CD4-positive, alpha-beta memory T cell (primary cell): ENCODE measurements at regions of chr1 and their contacts with region 1.

Region 1: GRCh38 chr1:109099938-109100773 is 9.6 kb downstream of the TMEM167B start:
- DNase-seq: peak; percentile 96 to 98 (median 97)
- H3K4me3 ChIP-seq: peak overlapping the region; percentile 80 to 81
- H3K4me3 Mint-ChIP-seq: peak overlapping the region; percentile 91 to 100 (median 96)
- H3K27ac ChIP-seq: peak overlapping the region; percentile 80
- H3K27ac Mint-ChIP-seq: peak overlapping the region; percentile 90 to 99 (median 98)
- H3K4me1 ChIP-seq: peaks cover 15% of the 10 kb centered on the region
- H3K4me1 Mint-ChIP-seq: peaks cover 7 to 20% (median 16%) of the 10 kb centered on the region in 4 donors
- H3K27me3 ChIP-seq: no peaks in the 10 kb centered on the region
- H3K27me3 Mint-ChIP-seq: no peaks in the 10 kb centered on the region

Region 2: DNA sequence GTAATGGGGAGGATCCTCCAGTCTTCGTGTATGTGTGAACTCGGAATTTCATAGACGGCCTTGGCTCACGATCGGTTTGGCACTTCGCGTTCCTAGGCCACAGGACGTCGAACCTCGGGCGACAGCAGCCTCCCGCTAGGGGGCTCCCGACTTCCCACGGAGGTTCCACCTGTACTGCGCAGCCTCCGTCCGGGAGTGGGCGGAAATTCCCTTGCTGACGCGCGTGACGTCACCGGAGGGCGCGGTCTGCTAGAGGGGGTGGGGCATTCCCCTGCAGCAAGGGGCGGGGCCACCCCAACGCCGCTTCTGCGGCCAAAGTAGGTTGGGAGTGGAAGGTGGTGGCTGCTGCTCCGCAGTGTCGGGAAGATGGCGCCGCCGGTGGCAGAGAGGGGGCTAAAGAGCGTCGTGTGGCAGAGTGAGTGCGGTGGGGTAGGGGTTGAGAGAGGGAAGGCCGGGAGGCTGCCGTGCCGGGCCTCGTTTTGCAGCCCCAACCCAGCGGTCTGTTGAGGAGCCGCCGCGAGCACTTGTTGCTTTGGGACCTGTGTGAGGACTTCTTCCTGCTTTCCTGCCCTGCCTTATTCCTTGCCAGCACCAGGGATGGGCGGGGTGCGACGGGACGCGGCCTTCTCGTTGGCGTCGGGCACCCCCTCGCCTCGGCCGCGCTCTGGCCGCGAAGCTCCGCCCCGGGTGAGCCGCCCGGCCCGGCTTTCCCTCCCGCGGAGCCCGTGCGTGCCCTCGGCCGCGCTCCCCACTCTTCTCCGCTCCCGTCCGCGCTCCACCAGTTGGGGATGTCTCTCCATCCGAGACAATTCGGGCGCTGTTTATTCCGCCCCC is 353.6 kb before region 1 on chr1 and contains the start of gene STXBP3:
- CTCF ChIA-PET with region 1: no interaction called
- POLR2A ChIA-PET with region 1: no interaction called
- intact Hi-C with region 1: loop called (anchors 1 kb)
- DNase-seq: peak; percentile 98 to 99 (median 99)
- H3K4me3 ChIP-seq: peak within 1 kb of the TSS; percentile 57 to 85
- H3K4me3 Mint-ChIP-seq: peak within 1 kb of the TSS; percentile 94 to 100 (median 99)
- H3K27ac ChIP-seq: peak within 1 kb of the TSS; percentile 95
- H3K27ac Mint-ChIP-seq: peak within 1 kb of the TSS; percentile 94 to 100 (median 99)
- H3K4me1 ChIP-seq: peaks cover 41% of the 10 kb centered on the region
- H3K4me1 Mint-ChIP-seq: peaks cover 25 to 47% (median 34%) of the 10 kb centered on the region in 4 donors
- H3K27me3 ChIP-seq: no peaks in the 10 kb centered on the region
- H3K27me3 Mint-ChIP-seq: no peaks in the 10 kb centered on the region
- total RNA-seq, gene STXBP3: 90.9 to 92.5 TPM

Region 3: DNA sequence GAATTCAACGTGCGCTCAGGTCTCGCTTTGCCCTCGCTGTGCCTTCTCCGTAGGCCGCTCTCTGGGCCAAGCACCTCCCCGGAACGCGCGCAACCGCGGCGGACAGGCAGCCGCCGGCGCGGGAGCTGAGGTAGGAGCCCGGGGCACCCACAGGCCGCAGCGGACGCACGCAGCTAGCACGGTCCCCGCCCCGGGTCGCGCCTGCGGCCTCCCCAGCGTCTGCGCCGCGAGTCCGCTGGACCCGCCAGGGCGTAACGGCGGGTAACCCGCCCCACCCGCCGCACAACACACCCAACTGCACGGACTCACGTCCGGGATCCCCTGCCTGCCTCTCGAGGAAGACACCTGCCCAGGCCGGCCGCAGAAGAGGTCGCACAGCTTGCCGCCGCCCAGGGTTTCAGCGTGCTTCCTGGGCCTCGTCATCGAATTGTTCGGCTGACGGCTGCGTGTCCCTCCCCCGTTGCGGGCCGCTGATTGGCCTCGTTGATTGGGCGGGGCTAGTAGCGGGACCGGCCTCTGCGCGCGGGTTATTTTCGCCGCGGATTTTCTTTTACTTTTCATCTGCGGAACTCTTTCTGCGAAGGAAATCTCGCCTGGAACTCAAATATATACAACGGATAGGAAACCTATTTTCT is 137.0 kb before region 1 on chr1 and contains the start of gene CLCC1:
- CTCF ChIA-PET with region 1: interaction called, 5 read pairs
- POLR2A ChIA-PET with region 1: interaction called, 17 read pairs
- intact Hi-C with region 1: loop called (anchors 1 kb)
- DNase-seq: peak; percentile 92 to 96 (median 94)
- H3K4me3 ChIP-seq: peak within 1 kb of the TSS; percentile 68 to 79
- H3K4me3 Mint-ChIP-seq: peak within 1 kb of the TSS; percentile 88 to 95 (median 90)
- H3K27ac ChIP-seq: peak within 1 kb of the TSS; percentile 81
- H3K27ac Mint-ChIP-seq: peak within 1 kb of the TSS; percentile 91 to 97 (median 96)
- H3K4me1 ChIP-seq: peaks cover 25% of the 10 kb centered on the region
- H3K4me1 Mint-ChIP-seq: peaks cover 18 to 52% (median 31%) of the 10 kb centered on the region in 4 donors
- H3K27me3 ChIP-seq: no peaks in the 10 kb centered on the region
- H3K27me3 Mint-ChIP-seq: no peaks in the 10 kb centered on the region
- total RNA-seq, gene CLCC1: 29.7 to 31.6 TPM

Region 4: DNA sequence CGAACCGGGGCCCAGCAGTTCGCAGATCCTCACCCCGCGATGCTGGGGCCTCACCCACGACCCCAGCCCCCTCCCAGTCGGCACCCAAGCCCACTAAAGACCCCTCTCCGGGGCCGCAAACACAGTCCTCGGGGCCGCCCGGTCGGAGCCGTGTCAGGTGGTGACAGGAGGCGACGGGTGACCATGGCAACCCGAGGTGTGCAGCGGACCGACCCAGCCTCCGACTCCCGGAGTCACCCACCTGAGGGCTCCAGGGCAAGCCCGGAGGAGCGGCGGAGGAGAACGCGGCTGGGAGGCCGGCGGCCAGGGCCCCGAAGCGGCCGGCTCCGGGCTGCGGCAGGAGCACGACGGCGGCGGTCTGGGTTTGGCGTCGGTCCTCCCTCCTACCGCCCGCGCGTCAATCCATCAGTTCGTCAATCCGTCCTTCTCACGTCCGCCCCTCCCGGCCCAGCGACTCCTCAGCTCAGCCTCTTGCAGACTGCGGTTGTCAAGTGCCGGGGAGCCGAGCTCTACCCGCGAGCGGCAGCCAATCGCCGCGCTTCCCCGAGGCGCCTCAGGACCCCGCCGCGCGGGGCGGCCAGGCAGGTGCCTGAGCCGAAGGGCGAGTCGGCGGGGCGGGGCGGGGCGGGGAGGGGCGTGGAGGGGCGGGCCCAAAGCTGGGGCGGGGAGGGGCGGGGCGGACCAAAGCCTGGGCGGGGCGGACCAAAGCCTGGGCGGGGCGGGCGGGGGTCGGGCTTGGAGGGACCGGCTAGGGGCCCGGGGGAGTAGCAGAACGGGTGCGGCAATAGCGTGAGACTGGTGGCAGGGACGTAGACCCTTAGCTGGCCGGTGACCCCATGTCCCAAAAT is 58.3 kb before region 1 on chr1 and contains the start of gene WDR47:
- CTCF ChIA-PET with region 1: interaction called, 11 read pairs
- POLR2A ChIA-PET with region 1: interaction called, 53 read pairs
- intact Hi-C with region 1: loop called (anchors 1 kb)
- DNase-seq: peak; percentile 96 to 98 (median 97)
- H3K4me3 ChIP-seq: peak within 1 kb of the TSS; percentile 65 to 92
- H3K4me3 Mint-ChIP-seq: peak within 1 kb of the TSS; percentile 91 to 95 (median 93)
- H3K27ac ChIP-seq: peak within 1 kb of the TSS; percentile 84
- H3K27ac Mint-ChIP-seq: peak within 1 kb of the TSS; percentile 79 to 96 (median 93)
- H3K4me1 ChIP-seq: peaks cover 14% of the 10 kb centered on the region
- H3K4me1 Mint-ChIP-seq: peaks cover 8 to 19% (median 14%) of the 10 kb centered on the region in 4 donors
- H3K27me3 ChIP-seq: no peaks in the 10 kb centered on the region
- H3K27me3 Mint-ChIP-seq: no peaks in the 10 kb centered on the region
- total RNA-seq, gene WDR47: 14.0 to 14.1 TPM

Region 5: GRCh38 chr1:109134423-109134822 is 34.3 kb after region 1 on chr1:
- CTCF ChIA-PET with region 1: no interaction called
- POLR2A ChIA-PET with region 1: no interaction called
- intact Hi-C with region 1: no loop called
- DNase-seq: no peak
- H3K4me3 ChIP-seq: no peak overlapping the region
- H3K4me3 Mint-ChIP-seq: no peak overlapping the region
- H3K27ac ChIP-seq: no peak overlapping the region
- H3K27ac Mint-ChIP-seq: peak overlapping the region in 2 of 7 donors; percentile 32 to 36
- H3K4me1 ChIP-seq: no peaks in the 10 kb centered on the region
- H3K4me1 Mint-ChIP-seq: peaks cover 0 to 6% (median 2%) of the 10 kb centered on the region in 4 donors
- H3K27me3 ChIP-seq: no peaks in the 10 kb centered on the region
- H3K27me3 Mint-ChIP-seq: no peaks in the 10 kb centered on the region

Region 6: DNA sequence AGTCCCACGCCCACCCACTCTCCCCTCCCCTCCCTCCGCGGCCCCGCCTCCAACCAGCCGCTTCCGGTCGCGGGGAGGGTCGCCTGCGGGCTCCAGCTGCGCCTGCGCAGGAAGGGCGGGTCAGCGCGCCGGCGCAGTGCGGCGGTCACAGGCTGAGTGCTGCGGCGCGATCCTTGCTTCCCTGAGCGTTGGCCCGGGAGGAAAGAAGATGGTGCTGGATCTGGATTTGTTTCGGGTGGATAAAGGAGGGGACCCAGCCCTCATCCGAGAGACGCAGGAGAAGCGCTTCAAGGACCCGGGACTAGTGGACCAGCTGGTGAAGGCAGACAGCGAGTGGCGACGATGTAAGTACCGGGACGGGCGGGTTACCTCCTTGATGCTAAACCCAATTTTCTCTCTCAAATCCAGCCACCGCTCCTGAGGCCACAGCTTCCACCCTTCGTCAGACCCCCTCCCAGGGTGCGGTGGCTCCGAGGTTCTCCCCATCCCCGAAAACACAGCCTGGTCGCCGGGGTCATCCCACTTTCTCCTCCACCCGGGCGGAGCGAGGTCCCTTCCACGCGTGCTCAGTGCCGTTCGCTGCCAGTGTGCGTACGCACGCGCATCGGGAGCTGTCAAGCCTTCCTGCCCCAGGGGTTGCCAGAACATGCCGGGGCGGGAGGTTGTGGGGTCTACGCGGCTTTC is 113.8 kb after region 1 on chr1 and contains the start of gene SARS1:
- CTCF ChIA-PET with region 1: interaction called, 7 read pairs
- POLR2A ChIA-PET with region 1: interaction called, 17 read pairs
- intact Hi-C with region 1: no loop called
- DNase-seq: peak; percentile 81 to 93 (median 88)
- H3K4me3 ChIP-seq: peak within 1 kb of the TSS; percentile 71 to 94
- H3K4me3 Mint-ChIP-seq: peak within 1 kb of the TSS; percentile 95 to 100 (median 98)
- H3K27ac ChIP-seq: peak within 1 kb of the TSS; percentile 78
- H3K27ac Mint-ChIP-seq: peak within 1 kb of the TSS; percentile 93 to 99 (median 96)
- H3K4me1 ChIP-seq: peaks cover 37% of the 10 kb centered on the region
- H3K4me1 Mint-ChIP-seq: peaks cover 24 to 45% (median 38%) of the 10 kb centered on the region in 4 donors
- H3K27me3 ChIP-seq: no peaks in the 10 kb centered on the region
- H3K27me3 Mint-ChIP-seq: no peaks in the 10 kb centered on the region
- total RNA-seq, gene SARS1: 178 to 190 TPM

Region 7: DNA sequence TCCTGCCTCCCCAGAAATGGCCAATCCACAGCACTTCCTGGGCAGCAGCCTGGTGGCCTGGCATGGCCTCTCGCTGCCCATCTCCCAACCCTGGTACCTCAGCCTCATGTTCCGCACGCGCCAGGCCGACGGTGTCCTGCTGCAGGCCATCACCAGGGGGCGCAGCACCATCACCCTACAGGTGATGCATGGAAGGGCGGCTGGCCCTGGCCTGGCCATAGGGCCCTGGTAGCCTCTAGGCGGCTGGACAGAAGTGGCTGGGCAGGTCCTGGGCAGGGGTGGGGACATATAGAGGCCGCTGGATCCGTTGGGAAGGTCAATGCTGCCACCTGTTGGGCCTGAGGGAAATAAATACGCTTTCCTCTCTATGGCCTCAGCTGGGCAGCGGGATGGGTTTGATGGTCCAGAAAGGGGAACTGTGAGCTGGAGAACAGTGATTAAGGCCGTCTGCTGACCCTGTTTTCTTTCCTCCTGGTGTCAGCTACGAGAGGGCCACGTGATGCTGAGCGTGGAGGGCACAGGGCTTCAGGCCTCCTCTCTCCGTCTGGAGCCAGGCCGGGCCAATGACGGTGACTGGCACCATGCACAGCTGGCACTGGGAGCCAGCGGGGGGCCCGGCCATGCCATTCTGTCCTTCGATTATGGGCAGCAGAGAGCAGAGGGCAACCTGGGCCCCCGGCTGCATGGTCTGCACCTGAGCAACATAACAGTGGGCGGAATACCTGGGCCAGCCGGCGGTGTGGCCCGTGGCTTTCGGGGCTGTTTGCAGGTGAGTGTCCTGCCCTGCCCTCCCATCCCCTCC is 163.6 kb after region 1 on chr1:
- CTCF ChIA-PET with region 1: no interaction called
- POLR2A ChIA-PET with region 1: no interaction called
- intact Hi-C with region 1: no loop called
- DNase-seq: peak; percentile 59 to 70 (median 67)
- H3K4me3 ChIP-seq: no peak overlapping the region
- H3K4me3 Mint-ChIP-seq: no peak overlapping the region
- H3K27ac ChIP-seq: no peak overlapping the region
- H3K27ac Mint-ChIP-seq: peak overlapping the region in 1 of 7 donors; percentile 75
- H3K4me1 ChIP-seq: no peaks in the 10 kb centered on the region
- H3K4me1 Mint-ChIP-seq: peaks cover 0 to 4% (median under 1%) of the 10 kb centered on the region in 4 donors
- H3K27me3 ChIP-seq: no peaks in the 10 kb centered on the region
- H3K27me3 Mint-ChIP-seq: peaks cover 0 to 2% of the 10 kb centered on the region in 2 donors

Region 8: GRCh38 chr1:109620841-109621286 is 520.7 kb after region 1 on chr1:
- CTCF ChIA-PET with region 1: no interaction called
- POLR2A ChIA-PET with region 1: no interaction called
- intact Hi-C with region 1: loop called (anchors 1 kb)
- DNase-seq: peak; percentile 96 to 99 (median 97)
- H3K4me3 ChIP-seq: peak overlapping the region; percentile 76 to 93
- H3K4me3 Mint-ChIP-seq: peak overlapping the region; percentile 92 to 99 (median 96)
- H3K27ac ChIP-seq: peak overlapping the region; percentile 96
- H3K27ac Mint-ChIP-seq: peak overlapping the region; percentile 91 to 99 (median 99)
- H3K4me1 ChIP-seq: peaks cover 72% of the 10 kb centered on the region
- H3K4me1 Mint-ChIP-seq: peaks cover 47 to 86% (median 58%) of the 10 kb centered on the region in 4 donors
- H3K27me3 ChIP-seq: no peaks in the 10 kb centered on the region
- H3K27me3 Mint-ChIP-seq: no peaks in the 10 kb centered on the region